ENCODE measurements at regions of chr12 and their contacts with region 1.

Region 1: GRCh38 chr12:12611512-12612306 is at the start of gene CREBL2:
- DNase-seq: peak; percentile 84 to 94
- ATAC-seq: peak; percentile 93 to 97 (median 94)
- H3K4me3 ChIP-seq: peak within 1 kb of the TSS; percentile 84
- H3K4me3 Mint-ChIP-seq: peak within 1 kb of the TSS; percentile 90
- H3K27ac ChIP-seq: peak within 1 kb of the TSS; percentile 87
- H3K27ac Mint-ChIP-seq: peak within 1 kb of the TSS; percentile 90 to 98
- H3K4me1 ChIP-seq: peaks cover 17% of the 10 kb centered on the region
- H3K4me1 Mint-ChIP-seq: peaks cover 34 to 36% of the 10 kb centered on the region in 2 donors
- H3K27me3 ChIP-seq: no peaks in the 10 kb centered on the region
- H3K27me3 Mint-ChIP-seq: no peaks in the 10 kb centered on the region
- CTCF ChIP-seq: no peak
- total RNA-seq, gene CREBL2: 9.0 to 13.1 (median 10.7) TPM

Region 2: DNA sequence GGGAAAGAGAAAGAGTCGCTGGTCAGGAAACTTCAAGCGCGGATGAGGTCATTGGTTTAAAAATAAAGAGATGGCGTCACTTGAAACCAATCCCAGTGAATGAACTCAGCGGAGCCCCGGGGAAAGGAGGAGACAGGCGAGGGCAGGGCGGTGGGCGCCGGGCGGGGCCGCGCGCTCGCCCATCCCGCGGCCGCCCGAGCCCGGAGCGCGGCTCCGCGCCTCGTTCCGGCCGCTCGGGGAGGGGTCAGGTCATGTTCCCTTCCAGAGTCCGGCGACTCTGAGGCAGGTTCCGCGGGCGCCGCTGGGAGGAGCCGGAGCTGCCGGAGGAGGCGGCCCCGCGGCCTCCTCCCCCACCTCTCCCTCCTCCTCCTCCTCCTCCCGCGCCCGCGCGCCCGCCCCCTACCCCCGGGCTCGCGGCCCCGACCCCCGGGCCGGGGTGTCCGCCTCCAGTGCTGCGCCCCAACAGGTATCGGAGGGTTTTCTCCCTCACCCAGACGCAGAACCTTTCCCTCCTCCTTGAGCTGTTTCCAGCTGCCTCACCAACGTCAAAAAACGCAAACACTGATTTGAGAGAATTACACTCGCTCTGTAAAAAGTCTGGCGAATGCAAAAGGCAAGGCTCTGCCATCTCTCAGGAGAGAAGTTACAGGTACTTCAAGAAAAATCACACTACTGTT is 49.0 kb before region 1 on chr12 and contains the start of gene DUSP16:
- intact Hi-C with region 1: loop called (anchors 1 kb)
- DNase-seq: peak; percentile 74 to 93
- ATAC-seq: peak; percentile 74 to 92 (median 84)
- H3K4me3 ChIP-seq: peak within 1 kb of the TSS; percentile 67
- H3K4me3 Mint-ChIP-seq: peak within 1 kb of the TSS; percentile 95
- H3K27ac ChIP-seq: peak within 1 kb of the TSS; percentile 88
- H3K27ac Mint-ChIP-seq: peak within 1 kb of the TSS; percentile 90 to 96
- H3K4me1 ChIP-seq: peaks cover 10% of the 10 kb centered on the region
- H3K4me1 Mint-ChIP-seq: peaks cover 10 to 13% of the 10 kb centered on the region in 2 donors
- H3K27me3 ChIP-seq: no peaks in the 10 kb centered on the region
- H3K27me3 Mint-ChIP-seq: peaks cover 0 to 3% of the 10 kb centered on the region in 2 donors
- CTCF ChIP-seq: no peak
- total RNA-seq, gene DUSP16: 6.9 to 19.9 (median 10.0) TPM

Region 3: GRCh38 chr12:13443498-13443897 is 831.8 kb after region 1 on chr12:
- intact Hi-C with region 1: no loop called
- DNase-seq: no peak
- ATAC-seq: no peak
- H3K4me3 ChIP-seq: no peak overlapping the region
- H3K4me3 Mint-ChIP-seq: no peak overlapping the region
- H3K27ac ChIP-seq: no peak overlapping the region
- H3K27ac Mint-ChIP-seq: no peak overlapping the region
- H3K4me1 ChIP-seq: no peaks in the 10 kb centered on the region
- H3K4me1 Mint-ChIP-seq: no peaks in the 10 kb centered on the region
- H3K27me3 ChIP-seq: no peaks in the 10 kb centered on the region
- H3K27me3 Mint-ChIP-seq: peaks cover 5 to 8% of the 10 kb centered on the region in 2 donors
- CTCF ChIP-seq: no peak

Measured in natural killer cell (primary cell).